ENCODE measurements at regions of chr4 and their contacts with region 1.

Region 1: GRCh38 chr4:173370477-173371291 is at the start of gene SAP30:
- DNase-seq: peak; percentile 98
- H3K4me3 ChIP-seq: peak within 1 kb of the TSS; percentile 81 to 92
- H3K27ac ChIP-seq: peak within 1 kb of the TSS; percentile 94 to 97
- H3K4me1 ChIP-seq: no peaks in the 10 kb centered on the region
- H3K27me3 ChIP-seq: no peaks in the 10 kb centered on the region
- CTCF ChIP-seq: peak in 1 of 4 experiments; percentile 17
- POLR2A ChIP-seq: peak; percentile 99
- total RNA-seq, gene SAP30: 34.9 to 39.0 TPM

Region 2: GRCh38 chr4:172996571-172997216 is 374.0 kb before region 1 on chr4:
- intact Hi-C with region 1: no loop called
- DNase-seq: no peak
- H3K4me3 ChIP-seq: no peak overlapping the region
- H3K27ac ChIP-seq: no peak overlapping the region
- H3K4me1 ChIP-seq: no peaks in the 10 kb centered on the region
- H3K27me3 ChIP-seq: no peaks in the 10 kb centered on the region
- CTCF ChIP-seq: no peak
- POLR2A ChIP-seq: no peak

Region 3: DNA sequence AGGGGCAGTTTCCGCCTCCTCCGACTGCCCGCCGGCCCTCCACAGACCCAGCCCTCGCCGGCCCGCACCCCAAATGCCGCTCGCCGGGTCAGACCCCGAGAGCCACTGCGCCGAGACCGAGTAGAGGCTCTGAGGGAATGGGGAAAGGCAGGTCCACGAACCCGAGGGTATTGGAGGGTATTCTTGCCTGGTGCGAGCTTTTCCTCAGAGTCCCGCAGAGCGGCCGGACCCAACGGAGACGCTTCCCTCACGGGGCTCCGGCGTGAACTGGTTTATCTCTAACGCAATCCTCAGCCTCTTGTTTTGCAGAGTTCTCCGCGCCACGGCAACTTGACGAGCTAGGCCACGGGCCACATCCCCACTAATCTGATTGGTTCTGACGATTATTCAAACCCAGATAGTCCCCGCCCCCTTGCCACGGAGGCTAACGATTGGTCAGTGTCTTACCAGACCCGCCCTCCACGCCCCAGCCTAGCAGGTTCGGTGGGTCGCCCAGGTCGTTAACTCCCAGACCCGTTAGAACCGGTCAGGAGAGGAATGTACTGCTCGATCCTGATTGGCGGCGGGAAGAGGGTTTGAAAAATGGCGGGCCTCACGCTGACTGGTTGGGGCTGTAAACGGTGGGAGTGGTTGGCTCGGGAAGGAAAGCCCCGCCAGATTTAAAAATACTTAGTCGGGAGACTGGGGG is 36.5 kb before region 1 on chr4 and contains the start of gene HMGB2:
- intact Hi-C with region 1: loop called (anchors 1 kb)
- DNase-seq: peak; percentile 100
- H3K4me3 ChIP-seq: peak within 1 kb of the TSS; percentile 82 to 98
- H3K27ac ChIP-seq: peak within 1 kb of the TSS; percentile 98 to 100
- H3K4me1 ChIP-seq: no peaks in the 10 kb centered on the region
- H3K27me3 ChIP-seq: no peaks in the 10 kb centered on the region
- CTCF ChIP-seq: no peak
- POLR2A ChIP-seq: peak; percentile 99
- total RNA-seq, gene HMGB2: 32.2 to 38.0 TPM

Region 4: GRCh38 chr4:173505924-173506518 is 135.3 kb after region 1 on chr4:
- intact Hi-C with region 1: no loop called
- DNase-seq: no peak
- H3K4me3 ChIP-seq: no peak overlapping the region
- H3K27ac ChIP-seq: no peak overlapping the region
- H3K4me1 ChIP-seq: no peaks in the 10 kb centered on the region
- H3K27me3 ChIP-seq: peaks cover 43% of the 10 kb centered on the region
- CTCF ChIP-seq: peak in 1 of 4 experiments; percentile 28
- POLR2A ChIP-seq: no peak

Measured in prostate gland (tissue), 2 donors.